PC-3 (cell line): ENCODE measurements at regions of chrX and their contacts with region 1.

Region 1: GRCh38 chrX:124931241-124931640 is 388.4 kb upstream of the TEX13C start:
- DNase-seq: no peak
- ATAC-seq: no peak
- H3K4me3 ChIP-seq: no peak overlapping the region
- H3K27ac ChIP-seq: no peak overlapping the region
- H3K4me1 ChIP-seq: no peaks in the 10 kb centered on the region
- H3K27me3 ChIP-seq: no peaks in the 10 kb centered on the region
- CTCF ChIP-seq: no peak

Region 2: GRCh38 chrX:124747299-124747698 is 183.9 kb before region 1 on chrX:
- CTCF ChIA-PET with region 1: no interaction called
- POLR2A ChIA-PET with region 1: no interaction called
- intact Hi-C with region 1: no loop called
- DNase-seq: no peak
- ATAC-seq: no peak
- H3K4me3 ChIP-seq: no peak overlapping the region
- H3K27ac ChIP-seq: no peak overlapping the region
- H3K4me1 ChIP-seq: no peaks in the 10 kb centered on the region
- H3K27me3 ChIP-seq: no peaks in the 10 kb centered on the region
- CTCF ChIP-seq: no peak

Region 3: DNA sequence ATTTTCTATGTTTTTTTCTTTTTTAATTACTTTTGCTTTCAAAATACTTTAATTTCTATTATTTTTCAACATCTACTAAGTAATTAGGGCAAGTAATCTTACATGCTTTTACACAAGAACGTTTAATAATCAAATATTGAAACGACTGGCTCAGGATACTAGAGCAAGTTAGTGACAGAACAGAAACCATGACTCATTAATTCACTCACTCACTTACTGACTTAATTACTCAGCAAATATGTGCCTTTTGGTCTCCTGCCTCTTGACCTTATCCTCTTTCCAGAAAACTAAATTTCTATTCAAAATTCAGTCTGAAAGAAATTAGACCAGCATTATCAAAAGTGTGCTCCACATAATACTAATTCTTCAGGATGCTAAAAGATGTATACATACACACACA is 73.6 kb after region 1 on chrX:
- CTCF ChIA-PET with region 1: no interaction called
- POLR2A ChIA-PET with region 1: interaction called, 13 read pairs
- intact Hi-C with region 1: no loop called
- DNase-seq: peak; percentile 4
- ATAC-seq: no peak
- H3K4me3 ChIP-seq: no peak overlapping the region
- H3K27ac ChIP-seq: no peak overlapping the region
- H3K4me1 ChIP-seq: no peaks in the 10 kb centered on the region
- H3K27me3 ChIP-seq: no peaks in the 10 kb centered on the region
- CTCF ChIP-seq: no peak